Activated CD4-positive, alpha-beta T cell treated with anti-CD3 and anti-CD28 coated beads, Interleukin-2, amount 10 ng/mL, durations not matched to agents 24 days and 14 days (primary cell): ENCODE measurements at regions of chr12 and their contacts with region 1.

Region 1: GRCh38 chr12:27821259-27821973 is 41.4 kb upstream of the MANSC4 start:
- DNase-seq: peak; percentile 85
- H3K4me3 Mint-ChIP-seq: peak overlapping the region; percentile 6
- H3K27ac Mint-ChIP-seq: peak overlapping the region; percentile 87
- H3K4me1 Mint-ChIP-seq: peaks cover 36% of the 10 kb centered on the region
- H3K27me3 Mint-ChIP-seq: peaks cover 52% of the 10 kb centered on the region

Region 2: GRCh38 chr12:27332407-27333301 is 488.8 kb before region 1 on chr12 and contains the start of gene BMAL2:
- intact Hi-C with region 1: loop called (anchors 5 kb)
- DNase-seq: peak; percentile 86
- H3K4me3 Mint-ChIP-seq: peak within 1 kb of the TSS; percentile 97
- H3K27ac Mint-ChIP-seq: peak within 1 kb of the TSS; percentile 98
- H3K4me1 Mint-ChIP-seq: peaks cover 58% of the 10 kb centered on the region
- H3K27me3 Mint-ChIP-seq: no peaks in the 10 kb centered on the region
- total RNA-seq, gene BMAL2: 55.9 and 58.8 TPM in 2 replicates

Region 3: DNA sequence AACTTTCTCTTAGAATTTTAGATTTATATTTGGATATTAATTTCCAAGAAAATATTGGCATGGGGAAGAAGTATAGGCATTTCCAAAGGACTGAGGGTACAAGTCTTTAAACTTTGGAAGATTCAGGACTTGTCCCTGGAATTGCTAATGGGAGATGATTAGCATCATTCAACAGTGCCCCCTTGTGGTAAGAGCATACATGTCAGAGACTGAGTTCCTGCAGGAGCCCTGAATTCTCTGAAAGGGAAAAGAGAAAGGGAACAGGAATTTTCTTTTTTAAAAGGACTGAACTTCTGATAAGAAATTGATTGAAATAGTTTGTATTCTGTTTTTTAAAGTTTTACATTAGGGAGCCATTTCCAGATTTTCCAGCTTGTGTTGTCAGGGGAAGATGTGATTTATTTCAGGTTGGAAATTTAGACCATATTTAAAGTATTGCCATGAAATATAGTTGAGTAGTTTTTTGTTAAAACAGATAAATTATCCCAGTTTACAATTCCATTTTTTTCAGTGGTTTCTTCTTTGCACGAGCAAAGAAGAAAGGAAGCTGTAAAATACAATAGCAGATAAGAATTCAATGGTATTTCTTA is 169.1 kb before region 1 on chr12:
- intact Hi-C with region 1: loop called (anchors 5 kb)
- DNase-seq: peak; percentile 81
- H3K4me3 Mint-ChIP-seq: no peak overlapping the region
- H3K27ac Mint-ChIP-seq: no peak overlapping the region
- H3K4me1 Mint-ChIP-seq: peaks cover 21% of the 10 kb centered on the region
- H3K27me3 Mint-ChIP-seq: no peaks in the 10 kb centered on the region

Region 4: DNA sequence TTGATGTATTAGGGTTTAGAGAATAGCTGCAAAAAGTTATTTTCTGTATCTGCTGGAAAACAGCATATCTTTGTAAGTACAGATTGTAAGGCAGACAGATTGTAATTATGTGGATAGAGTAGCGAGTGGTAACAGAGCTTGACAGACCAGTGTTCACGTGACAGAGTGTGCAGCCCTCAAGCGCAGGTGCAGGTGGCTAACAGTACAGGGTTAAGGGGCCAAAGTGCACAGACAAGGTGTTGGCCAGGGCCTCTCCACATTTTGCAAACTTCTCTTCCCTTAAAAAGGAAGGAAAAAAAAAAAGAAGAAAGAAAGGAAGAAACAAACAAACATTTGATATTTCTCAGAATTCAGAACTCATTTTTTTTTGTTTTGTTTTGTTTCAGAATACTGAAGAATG is 66.6 kb before region 1 on chr12:
- intact Hi-C with region 1: no loop called
- DNase-seq: no peak
- H3K4me3 Mint-ChIP-seq: no peak overlapping the region
- H3K27ac Mint-ChIP-seq: no peak overlapping the region
- H3K4me1 Mint-ChIP-seq: no peaks in the 10 kb centered on the region
- H3K27me3 Mint-ChIP-seq: no peaks in the 10 kb centered on the region

Region 5: DNA sequence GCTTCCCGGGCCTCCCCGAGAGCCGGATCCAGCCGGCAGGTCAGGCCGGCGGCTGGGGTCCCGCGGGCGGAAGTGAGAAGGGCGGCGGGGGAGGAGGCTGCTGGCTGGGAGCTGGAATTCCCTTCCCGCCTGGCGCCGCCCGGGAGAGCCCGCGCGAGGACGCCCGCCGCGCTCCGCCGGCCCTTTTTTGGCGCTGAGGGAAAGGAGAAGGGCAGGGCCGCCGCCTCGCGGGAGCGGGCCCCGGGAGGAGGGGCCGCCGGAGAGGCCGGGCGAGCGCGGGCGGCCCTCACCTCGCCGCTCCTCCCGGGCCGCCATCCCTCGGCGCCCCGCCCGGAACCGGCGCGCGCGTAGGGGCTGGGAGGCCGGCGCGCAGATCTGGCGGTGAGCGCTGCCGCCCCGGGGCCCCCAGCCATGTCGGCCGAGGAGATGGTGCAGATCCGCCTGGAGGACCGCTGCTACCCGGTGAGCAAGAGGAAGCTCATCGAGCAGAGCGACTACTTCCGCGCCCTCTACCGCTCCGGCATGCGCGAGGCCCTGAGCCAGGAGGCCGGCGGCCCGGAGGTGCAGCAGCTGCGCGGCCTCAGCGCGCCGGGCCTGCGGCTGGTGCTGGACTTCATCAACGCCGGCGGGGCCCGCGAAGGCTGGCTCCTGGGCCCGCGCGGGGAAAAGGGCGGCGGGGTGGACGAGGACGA is 41.4 kb before region 1 on chr12 and contains the starts of genes KLHL42 and MANSC4:
- intact Hi-C with region 1: loop called (anchors 1 kb)
- DNase-seq: peak; percentile 91
- H3K4me3 Mint-ChIP-seq: peak within 1 kb of the TSS; percentile 84
- H3K27ac Mint-ChIP-seq: peak within 1 kb of the TSS; percentile 82
- H3K4me1 Mint-ChIP-seq: peaks cover 29% of the 10 kb centered on the region
- H3K27me3 Mint-ChIP-seq: peaks cover 20% of the 10 kb centered on the region
- total RNA-seq, gene KLHL42: 13.6 and 14.5 TPM in 2 replicates
- total RNA-seq, gene MANSC4: not detected in 2 replicates

Region 6: GRCh38 chr12:27840244-27840999 is 19.0 kb after region 1 on chr12:
- intact Hi-C with region 1: no loop called
- DNase-seq: no peak
- H3K4me3 Mint-ChIP-seq: no peak overlapping the region
- H3K27ac Mint-ChIP-seq: no peak overlapping the region
- H3K4me1 Mint-ChIP-seq: no peaks in the 10 kb centered on the region
- H3K27me3 Mint-ChIP-seq: peaks cover 8% of the 10 kb centered on the region

Region 7: GRCh38 chr12:27852117-27852516 is 30.7 kb after region 1 on chr12:
- intact Hi-C with region 1: no loop called
- DNase-seq: no peak
- H3K4me3 Mint-ChIP-seq: no peak overlapping the region
- H3K27ac Mint-ChIP-seq: no peak overlapping the region
- H3K4me1 Mint-ChIP-seq: no peaks in the 10 kb centered on the region
- H3K27me3 Mint-ChIP-seq: peaks cover 13% of the 10 kb centered on the region

Region 8: DNA sequence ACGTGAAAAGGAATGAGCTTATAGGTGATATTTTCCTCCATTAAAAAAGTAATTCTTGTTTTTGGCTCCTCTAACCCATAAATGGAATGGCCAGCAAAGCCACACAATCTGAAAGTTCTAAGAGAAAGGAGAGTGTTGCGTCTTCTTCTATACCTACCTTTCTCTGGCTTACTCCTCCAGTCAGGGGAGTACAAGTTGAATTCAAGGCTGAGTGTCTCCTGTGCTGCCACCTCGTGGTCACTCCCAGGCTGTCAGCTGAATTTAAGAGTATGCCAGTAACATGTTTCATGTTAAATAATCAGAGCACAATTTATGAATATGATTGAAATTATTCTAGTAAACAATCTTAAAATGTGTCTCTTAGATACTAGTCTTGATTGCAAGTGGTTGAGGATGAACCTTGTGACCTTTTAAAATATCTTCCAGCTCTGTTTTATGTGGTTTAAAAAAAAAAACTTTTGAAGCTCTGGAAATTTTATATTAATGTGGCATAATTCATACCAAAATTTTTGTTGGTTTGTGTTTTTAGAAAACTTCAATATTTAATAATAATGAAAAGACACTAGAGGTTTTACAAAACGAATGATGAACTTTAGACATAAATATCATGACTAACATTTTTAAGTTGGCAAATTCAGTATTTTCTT is 119.5 kb after region 1 on chr12:
- intact Hi-C with region 1: loop called (anchors 5 kb)
- DNase-seq: peak; percentile 88
- H3K4me3 Mint-ChIP-seq: no peak overlapping the region
- H3K27ac Mint-ChIP-seq: no peak overlapping the region
- H3K4me1 Mint-ChIP-seq: no peaks in the 10 kb centered on the region
- H3K27me3 Mint-ChIP-seq: peaks cover 22% of the 10 kb centered on the region

Region 9: DNA sequence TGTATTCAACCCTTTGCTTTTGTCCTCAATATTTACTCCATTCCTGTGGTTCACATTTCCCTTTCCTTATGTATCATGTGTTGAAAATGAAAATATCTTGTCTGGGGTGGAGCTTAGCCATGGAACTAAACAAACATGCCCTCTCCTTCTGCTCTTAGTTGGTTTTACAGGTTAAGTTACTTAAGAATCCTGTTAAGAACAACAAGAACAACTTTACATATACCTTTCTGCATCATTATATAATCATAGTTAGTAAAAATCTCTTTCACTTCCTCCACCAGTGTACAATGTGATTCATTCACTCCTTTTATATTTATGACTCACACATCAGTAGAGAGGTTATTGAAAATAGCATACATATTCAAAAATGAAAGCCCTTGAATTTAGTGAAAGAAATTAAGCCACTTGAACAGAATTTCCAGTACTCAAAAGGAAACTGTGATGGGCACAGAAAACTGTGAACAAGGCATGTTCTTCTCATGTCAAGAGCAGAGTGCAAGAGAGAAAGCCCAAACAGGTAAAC is 676.5 kb after region 1 on chr12:
- intact Hi-C with region 1: loop called (anchors 5 kb)
- DNase-seq: no peak
- H3K4me3 Mint-ChIP-seq: no peak overlapping the region
- H3K27ac Mint-ChIP-seq: peak overlapping the region; percentile 7
- H3K4me1 Mint-ChIP-seq: peaks cover 9% of the 10 kb centered on the region
- H3K27me3 Mint-ChIP-seq: no peaks in the 10 kb centered on the region

Region 10: DNA sequence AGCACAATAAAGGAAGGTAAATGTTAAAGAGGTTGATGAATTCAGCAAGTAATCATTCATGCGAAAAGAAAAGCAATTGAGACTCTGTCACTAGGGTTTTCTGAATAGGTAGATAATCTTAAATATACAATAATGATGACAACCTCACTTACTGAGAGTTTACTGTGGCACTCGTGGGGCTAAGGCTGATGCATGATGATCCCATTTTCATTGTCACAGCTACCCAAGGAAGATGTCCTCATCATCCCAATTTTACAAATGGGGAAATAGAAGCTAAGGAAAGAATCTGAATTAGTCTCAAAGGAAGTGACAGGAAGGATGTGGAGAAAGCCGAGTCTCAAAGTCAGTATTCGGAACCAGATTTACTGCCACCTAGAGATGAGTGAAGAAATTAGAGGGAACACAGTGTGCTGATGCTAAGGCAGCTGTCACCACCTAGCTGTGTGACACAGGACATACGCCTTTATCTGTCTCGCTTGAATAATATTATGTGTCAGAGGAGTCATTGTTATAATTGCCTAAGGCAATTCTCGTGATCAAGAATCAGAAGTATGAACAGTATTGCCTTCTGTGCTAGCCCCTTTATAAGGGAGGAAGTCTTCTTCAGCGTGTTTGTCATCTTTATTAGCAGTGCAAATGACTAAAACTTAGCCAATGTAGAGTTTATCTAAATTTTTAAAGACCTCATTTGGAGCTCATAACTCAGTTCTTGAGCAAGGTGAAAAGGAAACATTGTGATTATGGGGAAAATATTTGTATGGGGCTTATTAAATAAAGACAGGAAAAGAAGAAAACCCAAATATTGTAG is 1496.3 kb after region 1 on chr12:
- intact Hi-C with region 1: no loop called
- DNase-seq: peak; percentile 83
- H3K4me3 Mint-ChIP-seq: no peak overlapping the region
- H3K27ac Mint-ChIP-seq: no peak overlapping the region
- H3K4me1 Mint-ChIP-seq: peaks cover 8% of the 10 kb centered on the region
- H3K27me3 Mint-ChIP-seq: no peaks in the 10 kb centered on the region